Gastrocnemius medialis (tissue), 4 donors: ENCODE measurements at regions of chr3 and their contacts with region 1.

Region 1: DNA sequence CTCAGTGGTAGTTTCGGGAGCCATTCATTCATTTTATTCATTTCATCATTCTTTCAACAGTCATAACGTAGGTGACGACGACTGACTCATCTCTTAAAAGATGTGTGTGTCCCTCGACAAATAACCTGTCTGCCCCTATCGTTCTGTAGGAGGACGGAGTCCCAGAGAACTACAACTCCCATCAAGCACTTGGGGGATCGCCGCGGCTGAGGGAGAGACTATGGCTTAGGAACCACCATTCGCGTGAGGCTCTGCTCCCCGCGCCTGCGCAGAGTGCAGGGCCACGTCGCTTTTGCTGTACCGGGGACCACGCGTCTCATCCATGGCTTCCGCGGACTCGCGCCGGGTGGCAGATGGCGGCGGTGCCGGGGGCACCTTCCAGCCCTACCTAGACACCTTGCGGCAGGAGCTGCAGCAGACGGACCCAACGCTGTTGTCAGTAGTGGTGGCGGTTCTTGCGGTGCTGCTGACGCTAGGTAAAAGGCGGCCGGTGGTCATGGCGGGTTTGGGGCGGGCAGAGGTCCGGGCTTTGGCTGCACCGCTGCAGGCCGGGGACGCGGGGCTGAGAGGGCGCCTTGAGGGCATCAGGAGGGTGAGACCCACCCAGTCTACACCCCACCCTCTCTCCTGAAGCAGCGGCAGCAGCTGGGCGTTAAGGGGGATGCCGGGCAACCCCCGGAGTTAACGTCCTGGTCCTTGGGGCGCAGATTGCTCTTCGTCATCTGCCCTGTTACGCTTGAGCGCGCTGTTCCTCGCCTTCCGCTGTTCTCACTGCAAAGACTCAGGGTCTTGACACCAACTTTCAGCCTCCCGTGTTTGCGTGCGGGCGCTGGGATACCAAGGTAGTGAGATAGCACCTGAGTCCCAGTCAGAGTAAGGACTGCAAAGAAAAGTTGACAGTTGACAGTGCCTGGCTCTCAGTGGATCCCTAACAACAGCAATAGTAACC is at the start of gene SRPRB:
- DNase-seq: peak; percentile 92 to 93
- ATAC-seq: peak; percentile 98 to 99
- H3K4me3 ChIP-seq: peak within 1 kb of the TSS; percentile 74 to 96 (median 87)
- H3K27ac ChIP-seq: peak within 1 kb of the TSS; percentile 72 to 85 (median 80)
- H3K4me1 ChIP-seq: peaks cover 6 to 11% of the 10 kb centered on the region in 2 donors
- H3K27me3 ChIP-seq: no peaks in the 10 kb centered on the region
- CTCF ChIP-seq: no peak
- POLR2A ChIP-seq: peak; percentile 36 to 55
- total RNA-seq, gene SRPRB: 19.0 to 22.3 (median 20.6) TPM

Region 2: GRCh38 chr3:133661454-133662277 is 144.1 kb before region 1 on chr3 and contains the start of gene TOPBP1:
- in situ Hi-C with region 1: no loop called
- intact Hi-C with region 1: loop called (anchors 5 kb)
- DNase-seq: peak; percentile 50 to 52
- ATAC-seq: peak; percentile 81 to 88
- H3K4me3 ChIP-seq: peak within 1 kb of the TSS; percentile 73 to 84 (median 80)
- H3K27ac ChIP-seq: peak within 1 kb of the TSS; percentile 70 to 78 (median 74)
- H3K4me1 ChIP-seq: peaks cover 11 to 22% of the 10 kb centered on the region in 2 donors
- H3K27me3 ChIP-seq: no peaks in the 10 kb centered on the region
- CTCF ChIP-seq: no peak
- POLR2A ChIP-seq: no peak
- total RNA-seq, gene TOPBP1: 11.8 to 21.1 (median 16.9) TPM

Region 3: GRCh38 chr3:133964547-133964946 is 158.7 kb after region 1 on chr3:
- in situ Hi-C with region 1: no loop called
- intact Hi-C with region 1: no loop called
- DNase-seq: no peak
- ATAC-seq: no peak
- H3K4me3 ChIP-seq: no peak overlapping the region
- H3K27ac ChIP-seq: peak overlapping the region in 1 of 4 donors; percentile 27
- H3K4me1 ChIP-seq: peaks cover 0 to 11% of the 10 kb centered on the region in 2 donors
- H3K27me3 ChIP-seq: no peaks in the 10 kb centered on the region
- CTCF ChIP-seq: no peak
- POLR2A ChIP-seq: no peak

Region 4: GRCh38 chr3:134485718-134486576 is 680.1 kb after region 1 on chr3 and contains the starts of genes ANAPC13 and CEP63:
- in situ Hi-C with region 1: loop called in 1 of 4 experiments (anchors 25 kb)
- intact Hi-C with region 1: loop called (anchors 10 kb)
- DNase-seq: peak; percentile 90 to 95
- ATAC-seq: peak; percentile 92 to 93
- H3K4me3 ChIP-seq: peak within 1 kb of the TSS; percentile 68 to 99 (median 90)
- H3K27ac ChIP-seq: peak within 1 kb of the TSS; percentile 93 to 99 (median 97)
- H3K4me1 ChIP-seq: peaks cover 35% of the 10 kb centered on the region in 2 donors
- H3K27me3 ChIP-seq: no peaks in the 10 kb centered on the region
- CTCF ChIP-seq: no peak
- POLR2A ChIP-seq: peak; percentile 65 to 72
- total RNA-seq, gene ANAPC13: 32.3 to 82.2 (median 78.7) TPM
- total RNA-seq, gene CEP63: 21.4 to 23.5 (median 22.4) TPM